ENCODE measurements at regions of chrX and their contacts with region 1.

Region 1: DNA sequence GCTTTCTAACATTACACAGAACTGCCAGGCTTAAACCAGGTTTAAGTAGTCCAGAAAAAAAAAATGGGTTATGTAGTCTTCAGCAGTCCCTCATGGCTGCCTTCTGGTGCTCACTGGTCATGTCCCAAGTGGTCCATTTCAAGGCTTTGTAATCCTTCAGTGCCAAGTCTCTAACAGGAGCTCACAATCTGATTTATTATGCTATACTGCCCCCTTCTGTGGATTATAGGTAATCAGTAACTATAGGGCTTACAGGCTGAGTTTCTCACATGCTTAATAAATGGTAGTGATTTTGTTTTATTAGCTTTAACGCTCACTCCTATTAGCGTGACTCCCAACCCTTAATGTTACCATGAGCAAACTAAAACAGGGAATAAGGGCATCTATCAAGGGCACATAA is 92.5 kb upstream of the EDA2R start:
- DNase-seq: no peak
- ATAC-seq: no peak
- H3K4me3 Mint-ChIP-seq: no peak overlapping the region
- H3K27ac Mint-ChIP-seq: no peak overlapping the region
- H3K4me1 Mint-ChIP-seq: peaks cover 2% of the 10 kb centered on the region
- H3K27me3 Mint-ChIP-seq: no peaks in the 10 kb centered on the region

Region 2: GRCh38 chrX:65581661-65582339 is 1149.6 kb before region 1 on chrX:
- CTCF ChIA-PET with region 1: interaction called, 13 read pairs
- POLR2A ChIA-PET with region 1: no interaction called
- DNase-seq: peak; percentile 65
- ATAC-seq: peak; percentile 67
- H3K4me3 Mint-ChIP-seq: no peak overlapping the region
- H3K27ac Mint-ChIP-seq: no peak overlapping the region
- H3K4me1 Mint-ChIP-seq: peaks cover 13% of the 10 kb centered on the region
- H3K27me3 Mint-ChIP-seq: no peaks in the 10 kb centered on the region

Region 3: DNA sequence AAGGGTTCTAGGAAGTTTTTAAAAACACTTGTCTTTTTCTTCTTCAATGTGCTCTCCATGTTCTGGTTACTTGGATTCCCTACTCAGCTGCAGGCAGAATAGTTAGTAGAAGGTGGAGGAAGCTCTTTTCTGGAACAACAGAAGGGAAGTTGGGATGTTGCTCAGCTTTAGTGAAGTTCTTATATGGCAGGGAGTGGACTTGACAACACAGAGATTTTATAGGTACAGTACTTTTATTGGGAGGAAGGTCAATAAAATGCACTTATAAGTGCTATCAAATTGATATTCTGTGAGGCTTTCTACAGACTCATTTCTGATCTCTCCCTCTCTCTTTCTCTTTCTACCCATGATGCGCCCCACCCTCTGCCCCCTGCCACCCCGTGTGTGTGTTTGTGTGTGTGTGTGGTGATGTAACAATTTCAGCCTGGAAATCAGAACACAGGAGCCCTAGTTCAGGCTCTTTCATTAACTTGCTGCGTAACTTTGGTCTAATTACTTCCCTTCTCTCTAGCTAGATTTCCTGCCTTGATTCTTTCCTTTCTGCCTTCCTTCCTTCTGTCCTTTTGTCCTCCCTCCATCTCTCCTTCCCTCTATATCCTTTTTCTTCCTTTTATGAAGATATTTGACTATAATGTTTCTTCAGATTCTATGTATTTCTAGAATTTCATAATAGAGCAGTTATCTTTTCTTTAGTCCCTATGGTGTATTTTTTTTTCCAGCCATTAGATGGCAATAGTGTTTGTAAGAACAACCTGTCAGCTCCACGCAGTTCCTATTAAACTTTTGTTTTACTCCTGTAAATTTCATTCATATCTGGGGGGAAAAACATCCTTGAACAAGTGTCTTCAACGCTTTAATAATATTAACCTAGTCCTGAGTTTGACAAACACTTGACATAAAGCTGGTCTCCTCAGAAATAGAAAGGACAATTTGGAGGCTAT is 530.3 kb before region 1 on chrX:
- CTCF ChIA-PET with region 1: interaction called, 13 read pairs
- POLR2A ChIA-PET with region 1: no interaction called
- DNase-seq: no peak
- ATAC-seq: no peak
- H3K4me3 Mint-ChIP-seq: no peak overlapping the region
- H3K27ac Mint-ChIP-seq: no peak overlapping the region
- H3K4me1 Mint-ChIP-seq: peaks cover 19% of the 10 kb centered on the region
- H3K27me3 Mint-ChIP-seq: peaks cover 9% of the 10 kb centered on the region

Region 4: GRCh38 chrX:66654411-66654810 is 77.0 kb before region 1 on chrX:
- CTCF ChIA-PET with region 1: no interaction called
- POLR2A ChIA-PET with region 1: no interaction called
- DNase-seq: no peak
- ATAC-seq: no peak
- H3K4me3 Mint-ChIP-seq: no peak overlapping the region
- H3K27ac Mint-ChIP-seq: no peak overlapping the region
- H3K4me1 Mint-ChIP-seq: no peaks in the 10 kb centered on the region
- H3K27me3 Mint-ChIP-seq: no peaks in the 10 kb centered on the region

Region 5: GRCh38 chrX:66684196-66684595 is 47.2 kb before region 1 on chrX:
- CTCF ChIA-PET with region 1: no interaction called
- POLR2A ChIA-PET with region 1: no interaction called
- DNase-seq: no peak
- ATAC-seq: no peak
- H3K4me3 Mint-ChIP-seq: no peak overlapping the region
- H3K27ac Mint-ChIP-seq: no peak overlapping the region
- H3K4me1 Mint-ChIP-seq: no peaks in the 10 kb centered on the region
- H3K27me3 Mint-ChIP-seq: no peaks in the 10 kb centered on the region